ENCODE measurements at regions of chr6 and their contacts with region 1.

Region 1: DNA sequence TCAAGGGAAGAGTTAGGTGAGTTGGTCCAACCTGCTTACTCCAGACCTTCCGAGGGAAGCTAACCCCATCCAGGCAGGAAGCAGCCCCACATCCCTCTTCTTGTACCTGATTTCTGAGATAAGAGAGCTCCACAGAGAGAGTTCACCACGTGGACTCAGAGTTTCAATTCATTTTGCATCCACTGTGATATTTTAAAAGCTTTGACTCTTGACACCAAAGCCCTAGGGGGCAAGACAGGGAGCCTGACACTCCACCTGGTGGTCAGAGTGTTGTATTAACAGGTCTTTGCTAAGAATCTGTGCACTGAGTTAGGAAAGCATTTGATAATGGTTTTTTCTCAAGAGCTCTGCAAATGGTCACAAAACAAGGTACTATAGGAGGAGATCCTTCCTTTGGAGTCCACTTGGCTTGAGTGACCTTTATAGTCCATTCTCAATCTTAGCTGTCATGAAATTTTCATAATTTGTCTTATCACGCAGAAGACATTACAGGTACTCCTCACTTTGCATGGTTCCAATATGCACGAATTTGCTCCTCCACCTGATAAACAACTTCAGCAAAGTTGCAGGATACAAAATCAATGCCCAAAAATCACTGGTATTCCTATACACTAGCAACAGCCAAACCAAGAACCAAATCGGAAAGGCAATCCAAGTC is 56.2 kb upstream of the RIPOR2 start:
- DNase-seq: peak; percentile 51
- H3K4me3 ChIP-seq: no peak overlapping the region; a peak in 1 of 4 replicates
- H3K27ac ChIP-seq: no peak overlapping the region
- H3K4me1 ChIP-seq: peaks cover 0 to 8% of the 10 kb centered on the region in 2 experiments; a peak in 1 of 4 replicates
- H3K27me3 ChIP-seq: no peaks in the 10 kb centered on the region
- CTCF ChIP-seq: peak; percentile 66
- EP300 ChIP-seq: no peak
- RAD21 ChIP-seq: peak; percentile 71

Region 2: GRCh38 chr6:24899997-24900325 is 92.0 kb before region 1 on chr6:
- CTCF ChIA-PET with region 1: interaction called, 10 read pairs
- POLR2A ChIA-PET with region 1: no interaction called
- DNase-seq: no peak
- H3K4me3 ChIP-seq: no peak overlapping the region
- H3K27ac ChIP-seq: no peak overlapping the region
- H3K4me1 ChIP-seq: no peaks in the 10 kb centered on the region; a peak in 1 of 4 replicates
- H3K27me3 ChIP-seq: no peaks in the 10 kb centered on the region
- CTCF ChIP-seq: no peak
- EP300 ChIP-seq: no peak
- RAD21 ChIP-seq: no peak

Region 3: GRCh38 chr6:24910961-24911712 is 80.8 kb before region 1 on chr6:
- CTCF ChIA-PET with region 1: interaction called, 15 read pairs
- POLR2A ChIA-PET with region 1: no interaction called
- DNase-seq: peak; percentile 81
- H3K4me3 ChIP-seq: peak overlapping the region; percentile 57 to 72
- H3K27ac ChIP-seq: no peak overlapping the region
- H3K4me1 ChIP-seq: peaks cover 0 to 12% of the 10 kb centered on the region in 2 experiments; a peak in 1 of 4 replicates
- H3K27me3 ChIP-seq: peaks cover 18% of the 10 kb centered on the region
- CTCF ChIP-seq: no peak
- EP300 ChIP-seq: no peak
- RAD21 ChIP-seq: no peak

Region 4: DNA sequence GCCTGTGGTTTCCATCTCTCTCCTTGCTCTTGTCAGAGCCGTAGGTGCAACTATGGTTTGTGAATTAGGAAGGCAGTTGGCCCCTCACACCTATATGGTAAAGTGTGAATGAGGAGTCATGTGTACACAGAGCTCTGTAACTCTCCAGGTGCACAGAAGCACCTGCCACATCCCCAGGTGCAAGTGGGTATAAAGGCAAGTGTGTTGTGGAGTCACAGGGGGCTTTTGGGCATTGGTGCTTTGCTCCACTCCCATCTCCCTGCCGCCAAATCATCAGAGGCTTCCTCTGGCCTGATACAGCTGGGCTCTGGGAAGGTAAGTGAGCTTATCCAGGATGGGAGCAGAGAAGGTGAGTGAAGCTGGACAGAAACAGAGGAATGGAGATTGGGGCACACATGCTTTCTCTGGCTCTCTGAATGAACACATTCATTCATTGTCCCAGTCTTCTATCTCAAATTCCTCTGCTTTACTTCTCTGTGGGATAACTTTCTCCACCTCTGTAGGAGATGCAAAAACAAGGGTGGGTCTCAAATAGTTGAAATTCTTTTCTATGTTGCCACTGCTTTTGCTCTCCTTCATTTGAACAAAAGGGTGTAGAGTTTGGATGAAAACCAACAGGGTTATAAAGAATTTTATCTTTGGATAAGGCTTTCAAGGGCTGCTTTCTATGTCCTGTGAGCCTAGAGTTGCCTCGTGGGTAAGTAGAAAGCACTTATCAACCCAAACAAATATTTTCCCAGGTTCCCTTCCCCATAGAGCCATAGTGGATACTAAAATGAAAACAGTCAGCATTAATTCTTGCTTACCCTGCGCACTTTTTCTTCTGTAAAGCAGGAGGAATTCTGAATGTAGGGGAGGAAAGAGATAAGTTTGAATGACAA is 11.2 kb before region 1 on chr6:
- CTCF ChIA-PET with region 1: interaction called, 25 read pairs
- POLR2A ChIA-PET with region 1: no interaction called
- DNase-seq: no peak
- H3K4me3 ChIP-seq: no peak overlapping the region
- H3K27ac ChIP-seq: peak overlapping the region; percentile 14 to 43; a peak in 2 of 4 replicates
- H3K4me1 ChIP-seq: peaks cover 0 to 27% of the 10 kb centered on the region in 2 experiments; a peak in 2 of 4 replicates
- H3K27me3 ChIP-seq: no peaks in the 10 kb centered on the region
- CTCF ChIP-seq: no peak
- EP300 ChIP-seq: no peak
- RAD21 ChIP-seq: no peak

Region 5: DNA sequence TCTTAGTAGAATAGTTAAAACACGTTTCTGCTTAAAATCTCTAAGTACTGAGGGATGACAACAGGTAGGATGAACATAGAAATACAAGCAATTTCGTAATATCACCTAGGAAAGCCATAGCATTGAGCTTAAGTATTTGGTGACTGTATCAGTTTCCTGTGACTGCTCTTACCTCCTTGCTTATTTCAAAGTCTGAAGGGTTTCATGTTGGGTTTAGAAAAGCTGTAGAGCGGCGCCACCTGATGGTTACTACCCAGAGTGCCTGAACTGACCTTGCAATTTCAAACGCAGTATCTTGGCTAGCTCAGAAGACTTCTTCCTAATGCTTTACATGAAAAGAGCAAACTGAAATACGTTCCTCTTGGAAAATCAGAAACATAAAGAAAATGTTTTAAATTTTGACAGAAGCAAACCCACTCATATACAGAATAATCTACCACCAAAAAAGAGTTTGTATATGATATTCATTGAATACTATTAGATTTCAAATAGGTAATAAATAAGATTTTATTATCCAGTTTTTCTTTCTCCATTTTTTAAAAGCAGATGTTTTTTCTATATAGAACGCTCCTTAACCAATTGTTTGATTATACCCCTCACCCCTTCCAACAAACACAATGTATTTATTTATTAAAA is 26.1 kb after region 1 on chr6:
- CTCF ChIA-PET with region 1: interaction called, 17 read pairs
- POLR2A ChIA-PET with region 1: no interaction called
- DNase-seq: no peak
- H3K4me3 ChIP-seq: peak overlapping the region in 1 of 2 experiments; percentile 45; a peak in 1 of 4 replicates
- H3K27ac ChIP-seq: no peak overlapping the region
- H3K4me1 ChIP-seq: peaks cover 5 to 12% of the 10 kb centered on the region in 2 experiments
- H3K27me3 ChIP-seq: no peaks in the 10 kb centered on the region
- CTCF ChIP-seq: peak; percentile 59
- EP300 ChIP-seq: no peak
- RAD21 ChIP-seq: peak; percentile 66

Region 6: DNA sequence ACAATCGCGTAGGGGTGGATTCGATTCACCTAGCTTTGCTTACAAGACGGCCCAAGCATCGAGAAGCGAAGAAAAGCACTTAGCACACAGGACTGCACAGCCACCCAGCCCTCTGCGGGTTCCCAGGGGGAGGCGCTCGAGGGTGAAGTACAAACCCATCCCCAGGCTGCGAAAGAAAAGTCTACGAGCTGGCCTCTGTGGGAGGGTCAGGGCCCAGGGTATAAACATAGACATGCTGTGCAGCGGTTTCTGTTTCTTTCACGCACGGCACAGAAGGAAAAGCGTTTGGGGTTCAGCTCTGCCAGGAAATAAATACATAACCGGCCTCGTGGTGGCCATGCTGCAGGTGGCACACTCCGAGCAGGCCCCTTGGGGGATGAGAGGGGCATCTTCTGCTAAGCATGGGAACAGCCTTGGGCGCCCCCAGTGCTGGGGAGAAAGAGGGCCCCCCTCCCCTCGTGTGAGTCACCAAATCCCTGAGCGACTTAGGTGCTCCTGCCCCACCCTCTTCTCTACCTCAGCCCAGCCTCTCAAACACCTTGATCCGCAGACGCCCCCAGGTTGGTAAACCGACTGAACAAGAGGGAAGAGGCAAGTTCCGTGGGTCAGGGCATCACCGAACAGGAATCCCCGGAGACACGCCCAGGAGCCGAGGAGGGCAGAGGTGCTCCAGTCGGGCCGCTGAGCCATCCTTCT is 35.4 kb after region 1 on chr6:
- CTCF ChIA-PET with region 1: interaction called, 10 read pairs
- POLR2A ChIA-PET with region 1: no interaction called
- DNase-seq: no peak
- H3K4me3 ChIP-seq: no peak overlapping the region
- H3K27ac ChIP-seq: no peak overlapping the region
- H3K4me1 ChIP-seq: peaks cover 0 to 14% of the 10 kb centered on the region in 2 experiments; a peak in 1 of 4 replicates
- H3K27me3 ChIP-seq: no peaks in the 10 kb centered on the region
- CTCF ChIP-seq: no peak
- EP300 ChIP-seq: no peak
- RAD21 ChIP-seq: no peak

Region 7: GRCh38 chr6:25070547-25071366 is 78.8 kb after region 1 on chr6:
- CTCF ChIA-PET with region 1: interaction called, 11 read pairs
- POLR2A ChIA-PET with region 1: no interaction called
- DNase-seq: peak; percentile 68
- H3K4me3 ChIP-seq: peak overlapping the region; percentile 33 to 46; a peak in 2 of 4 replicates
- H3K27ac ChIP-seq: no peak overlapping the region; a peak in 1 of 4 replicates
- H3K4me1 ChIP-seq: peaks cover 0 to 2% of the 10 kb centered on the region in 2 experiments; a peak in 2 of 4 replicates
- H3K27me3 ChIP-seq: no peaks in the 10 kb centered on the region
- CTCF ChIP-seq: peak; percentile 96
- EP300 ChIP-seq: no peak
- RAD21 ChIP-seq: peak; percentile 98

Measured in SK-N-SH (cell line).